ENCODE measurements at regions of chr3 and their contacts with region 1.

Region 1: GRCh38 chr3:31610700-31611275 is 78.1 kb downstream of the STT3B start:
- DNase-seq: no peak
- ATAC-seq: peak in 1 of 4 donors; percentile 60
- H3K4me3 ChIP-seq: no peak overlapping the region
- H3K27ac ChIP-seq: no peak overlapping the region
- H3K4me1 ChIP-seq: peaks cover 17% of the 10 kb centered on the region
- H3K27me3 ChIP-seq: no peaks in the 10 kb centered on the region
- CTCF ChIP-seq: peak; percentile 39

Region 2: DNA sequence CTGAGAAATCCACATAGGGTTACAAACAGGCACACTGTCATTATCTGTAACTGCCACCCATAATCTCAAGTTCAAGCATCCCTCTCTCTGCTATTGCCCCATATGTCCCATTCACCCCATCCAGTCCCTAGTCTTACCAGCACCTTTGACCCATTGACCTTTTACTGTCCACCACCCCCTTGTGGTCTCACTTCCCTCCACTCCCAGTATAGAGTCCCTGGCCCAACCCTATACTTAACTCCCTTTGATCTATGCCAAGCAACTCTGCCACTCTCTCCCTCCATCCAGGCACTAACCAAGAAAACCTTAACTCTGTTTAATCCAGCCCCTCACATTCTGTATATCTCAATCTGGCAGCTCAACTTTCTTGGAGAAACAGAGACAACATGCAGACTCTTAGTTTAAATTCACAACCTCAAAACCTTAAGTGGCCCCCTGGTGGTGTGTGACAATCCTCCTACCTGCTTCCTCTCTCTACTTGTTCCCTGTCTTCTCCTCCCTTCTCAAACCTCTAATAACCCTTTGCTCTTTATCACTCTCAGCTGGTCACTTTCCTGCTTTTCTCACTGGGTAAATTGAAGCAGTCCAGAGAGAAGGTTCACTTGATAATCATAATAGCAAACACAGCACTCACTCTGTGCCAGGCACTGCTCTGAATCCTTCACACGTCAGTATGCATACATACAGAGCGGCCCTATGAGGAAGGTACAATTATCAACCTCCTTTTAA is 84.7 kb after region 1 on chr3:
- intact Hi-C with region 1: no loop called
- DNase-seq: no peak
- ATAC-seq: no peak
- H3K4me3 ChIP-seq: no peak overlapping the region
- H3K27ac ChIP-seq: no peak overlapping the region
- H3K4me1 ChIP-seq: no peaks in the 10 kb centered on the region
- H3K27me3 ChIP-seq: no peaks in the 10 kb centered on the region
- CTCF ChIP-seq: no peak

Region 3: DNA sequence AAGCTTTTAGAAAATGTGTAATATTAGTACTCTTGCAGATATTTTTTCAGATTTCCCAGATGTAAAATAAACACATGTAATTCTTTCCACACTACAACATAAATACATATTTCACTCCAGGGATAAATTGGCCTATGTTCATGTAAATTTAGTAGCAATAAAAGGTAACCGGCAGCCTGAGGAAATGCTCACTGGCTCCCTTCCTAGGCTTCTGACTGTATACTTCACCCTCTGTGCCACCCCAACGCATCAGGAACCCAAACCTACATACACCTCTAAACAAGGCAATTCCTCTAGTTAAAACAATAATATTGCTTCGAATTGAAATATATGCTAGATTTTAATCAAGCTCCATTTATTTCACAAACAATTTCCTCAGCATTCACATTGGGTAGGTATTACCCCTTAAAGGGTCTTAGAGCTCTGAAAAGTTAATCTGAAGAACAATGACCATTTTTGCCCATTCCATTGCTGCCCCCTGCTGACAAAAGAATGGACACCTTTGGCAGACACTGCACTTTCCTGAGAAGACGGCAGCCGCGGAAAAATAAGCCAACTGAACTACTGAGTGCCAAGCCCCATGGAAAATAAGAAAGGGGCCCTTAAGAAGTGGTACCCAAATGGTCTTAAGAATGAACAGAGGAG is 157.8 kb after region 1 on chr3:
- intact Hi-C with region 1: loop called in 1 of 2 experiments (anchors 1 kb)
- DNase-seq: peak; percentile 35 to 56
- ATAC-seq: peak; percentile 43 to 84 (median 60)
- H3K4me3 ChIP-seq: no peak overlapping the region
- H3K27ac ChIP-seq: no peak overlapping the region
- H3K4me1 ChIP-seq: no peaks in the 10 kb centered on the region
- H3K27me3 ChIP-seq: no peaks in the 10 kb centered on the region
- CTCF ChIP-seq: peak; percentile 69

Measured in psoas muscle (tissue), 8 donors.